Caco-2 (cell line): ENCODE measurements at regions of chr3 and their contacts with region 1.

Region 1: DNA sequence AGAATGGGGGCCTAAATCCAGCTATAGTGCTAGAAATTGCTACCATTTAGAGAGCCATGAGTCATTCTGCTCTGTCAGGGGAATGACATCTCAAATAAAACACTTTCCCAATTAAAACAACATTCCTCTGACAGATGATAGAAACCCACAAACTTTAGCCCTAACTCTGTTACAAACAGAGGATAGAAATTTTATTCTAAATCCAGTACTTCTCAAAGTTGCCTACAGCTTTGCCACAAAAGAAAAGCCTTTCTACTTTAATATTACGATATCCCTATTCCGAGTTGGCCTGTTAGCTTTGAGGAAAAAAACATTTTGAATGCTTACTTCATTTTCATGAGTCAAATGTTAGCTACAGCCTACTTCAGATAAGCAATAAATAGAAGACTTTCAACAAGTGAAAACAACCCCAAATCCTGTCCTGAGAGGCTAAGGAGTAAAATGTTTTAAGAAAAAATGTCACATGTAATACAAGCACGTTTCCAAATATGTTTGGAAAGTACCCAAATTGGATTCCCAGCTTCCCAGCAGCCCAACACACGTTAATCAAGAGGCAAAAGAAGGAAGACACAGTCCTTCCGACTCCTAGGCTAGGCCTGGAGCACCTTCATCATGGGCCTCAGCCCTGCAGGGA is 83.6 kb downstream of the ATP1B3 start:
- DNase-seq: no peak
- H3K4me3 ChIP-seq: no peak overlapping the region
- H3K4me3 Mint-ChIP-seq: no peak overlapping the region
- H3K27ac Mint-ChIP-seq: no peak overlapping the region
- H3K4me1 ChIP-seq: no peaks in the 10 kb centered on the region
- H3K4me1 Mint-ChIP-seq: no peaks in the 10 kb centered on the region
- H3K27me3 ChIP-seq: no peaks in the 10 kb centered on the region
- H3K27me3 Mint-ChIP-seq: no peaks in the 10 kb centered on the region
- CTCF ChIP-seq: no peak

Region 2: DNA sequence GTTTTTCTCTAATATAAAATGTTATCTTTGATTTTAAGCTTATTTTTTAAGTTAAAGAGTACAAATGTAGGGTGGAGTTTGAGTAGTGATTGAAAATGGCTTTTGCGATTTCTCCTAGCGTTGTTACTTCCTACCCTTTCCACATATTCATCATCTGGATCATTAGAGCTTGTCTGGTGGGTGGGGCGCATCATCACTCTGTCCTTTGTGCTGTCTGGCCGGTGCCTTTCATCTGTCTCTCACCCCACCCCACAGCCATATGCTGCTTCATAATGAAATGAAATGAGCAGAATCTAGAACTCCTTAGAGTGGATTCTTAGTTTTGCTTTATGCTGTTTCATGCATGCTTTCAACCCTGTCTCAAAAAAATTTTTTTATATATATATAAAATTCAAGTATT is 39.3 kb before region 1 on chr3:
- CTCF ChIA-PET with region 1: no interaction called
- POLR2A ChIA-PET with region 1: no interaction called
- intact Hi-C with region 1: no loop called
- DNase-seq: no peak
- H3K4me3 ChIP-seq: no peak overlapping the region
- H3K4me3 Mint-ChIP-seq: no peak overlapping the region
- H3K27ac Mint-ChIP-seq: no peak overlapping the region
- H3K4me1 ChIP-seq: no peaks in the 10 kb centered on the region
- H3K4me1 Mint-ChIP-seq: no peaks in the 10 kb centered on the region
- H3K27me3 ChIP-seq: no peaks in the 10 kb centered on the region
- H3K27me3 Mint-ChIP-seq: no peaks in the 10 kb centered on the region
- CTCF ChIP-seq: no peak

Region 3: GRCh38 chr3:141998669-141999290 is 38.7 kb after region 1 on chr3:
- CTCF ChIA-PET with region 1: no interaction called
- POLR2A ChIA-PET with region 1: no interaction called
- intact Hi-C with region 1: loop called (anchors 1 kb)
- DNase-seq: no peak
- H3K4me3 ChIP-seq: no peak overlapping the region
- H3K4me3 Mint-ChIP-seq: no peak overlapping the region
- H3K27ac Mint-ChIP-seq: no peak overlapping the region
- H3K4me1 ChIP-seq: no peaks in the 10 kb centered on the region
- H3K4me1 Mint-ChIP-seq: no peaks in the 10 kb centered on the region
- H3K27me3 ChIP-seq: no peaks in the 10 kb centered on the region
- H3K27me3 Mint-ChIP-seq: no peaks in the 10 kb centered on the region
- CTCF ChIP-seq: peak in 1 of 2 experiments; percentile 35

Region 4: DNA sequence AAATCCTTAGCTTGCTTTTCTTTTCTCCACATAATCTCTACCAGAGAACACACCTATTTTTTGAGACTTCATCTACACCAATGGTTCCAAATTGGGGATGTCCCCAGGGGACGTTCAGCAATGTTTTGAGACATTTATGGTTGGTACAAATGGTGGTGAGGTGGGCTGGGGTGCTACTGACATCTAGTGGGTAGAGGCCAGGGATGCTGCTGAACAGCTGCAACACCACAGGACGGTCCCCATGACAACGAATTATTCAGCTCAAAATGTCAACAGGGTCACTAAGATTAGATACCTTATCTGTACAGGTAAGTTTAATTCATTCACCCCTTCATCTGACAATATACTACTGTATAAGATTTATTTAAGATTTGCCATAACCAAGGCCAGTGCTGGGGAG is 251.0 kb after region 1 on chr3:
- CTCF ChIA-PET with region 1: no interaction called
- POLR2A ChIA-PET with region 1: no interaction called
- intact Hi-C with region 1: loop called (anchors 1 kb)
- DNase-seq: peak in 1 of 2 experiments; percentile 38
- H3K4me3 ChIP-seq: no peak overlapping the region
- H3K4me3 Mint-ChIP-seq: no peak overlapping the region
- H3K27ac Mint-ChIP-seq: no peak overlapping the region
- H3K4me1 ChIP-seq: no peaks in the 10 kb centered on the region
- H3K4me1 Mint-ChIP-seq: no peaks in the 10 kb centered on the region
- H3K27me3 ChIP-seq: no peaks in the 10 kb centered on the region
- H3K27me3 Mint-ChIP-seq: no peaks in the 10 kb centered on the region
- CTCF ChIP-seq: peak in 1 of 2 experiments; percentile 61

Region 5: DNA sequence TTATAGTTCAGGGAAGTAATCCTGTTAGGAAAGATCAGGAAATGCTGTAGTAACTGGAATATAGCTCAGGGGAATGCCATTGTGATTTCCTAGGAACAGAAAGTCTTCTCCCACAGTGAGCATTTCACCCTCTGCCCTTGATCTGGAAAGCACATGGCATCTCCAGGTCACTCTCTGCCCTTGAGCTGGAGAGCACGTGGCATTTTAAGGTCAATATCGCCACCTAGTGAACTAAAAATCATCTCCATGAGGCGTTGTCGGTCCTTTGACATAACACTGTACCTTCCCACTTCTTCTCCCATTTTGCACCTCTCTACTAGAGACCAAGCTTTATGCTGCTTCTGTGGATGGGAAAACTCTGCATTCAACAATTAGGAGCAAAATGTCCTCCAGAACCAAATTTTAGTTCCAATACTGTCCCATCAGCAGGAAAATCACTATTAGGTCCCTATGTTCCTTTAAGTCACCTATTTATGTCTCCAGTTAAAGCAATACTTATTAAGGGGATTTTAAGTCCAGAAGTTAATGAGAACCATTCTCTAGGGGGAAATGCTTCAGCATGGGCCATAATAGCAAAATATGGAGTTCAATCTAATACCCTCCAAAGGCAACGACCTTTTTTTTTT is 320.0 kb after region 1 on chr3:
- CTCF ChIA-PET with region 1: no interaction called
- POLR2A ChIA-PET with region 1: no interaction called
- intact Hi-C with region 1: loop called (anchors 1 kb)
- DNase-seq: peak; percentile 55 to 64
- H3K4me3 ChIP-seq: no peak overlapping the region
- H3K4me3 Mint-ChIP-seq: no peak overlapping the region
- H3K27ac Mint-ChIP-seq: no peak overlapping the region
- H3K4me1 ChIP-seq: no peaks in the 10 kb centered on the region
- H3K4me1 Mint-ChIP-seq: no peaks in the 10 kb centered on the region
- H3K27me3 ChIP-seq: no peaks in the 10 kb centered on the region
- H3K27me3 Mint-ChIP-seq: no peaks in the 10 kb centered on the region
- CTCF ChIP-seq: peak; percentile 48 to 56